PC-3 (cell line): ENCODE measurements at regions of chr4 and their contacts with region 1.

Region 1: GRCh38 chr4:81421346-81422218 is 50.1 kb downstream of the RASGEF1B start:
- DNase-seq: peak; percentile 89
- ATAC-seq: peak; percentile 98
- H3K4me3 ChIP-seq: no peak overlapping the region
- H3K27ac ChIP-seq: peak overlapping the region; percentile 52
- H3K4me1 ChIP-seq: peaks cover 17% of the 10 kb centered on the region
- H3K27me3 ChIP-seq: no peaks in the 10 kb centered on the region
- CTCF ChIP-seq: no peak

Region 2: DNA sequence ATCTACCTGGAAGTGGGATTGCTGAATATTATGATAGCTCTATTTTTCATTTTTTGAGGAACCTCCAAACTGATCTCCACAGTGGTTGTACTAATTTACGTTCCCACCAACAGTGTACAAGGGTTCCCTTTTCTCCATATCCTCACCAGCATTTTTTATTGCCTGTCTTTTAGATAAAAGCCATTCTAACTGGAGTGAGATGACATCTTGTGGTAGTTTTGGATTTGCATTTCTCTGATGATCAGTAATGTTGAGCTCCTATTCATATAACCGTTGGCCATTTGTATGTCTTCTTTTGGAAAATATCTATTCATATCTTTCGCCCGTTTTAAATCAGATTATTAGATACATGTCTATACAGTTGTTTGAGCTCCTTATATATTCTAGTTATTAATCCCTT is 51.7 kb before region 1 on chr4:
- CTCF ChIA-PET with region 1: no interaction called
- POLR2A ChIA-PET with region 1: no interaction called
- intact Hi-C with region 1: no loop called
- DNase-seq: peak; percentile 5
- ATAC-seq: 0 out of 2 replicates have a peak, but pooled peaks have one; percentile 29
- H3K4me3 ChIP-seq: no peak overlapping the region
- H3K27ac ChIP-seq: no peak overlapping the region
- H3K4me1 ChIP-seq: no peaks in the 10 kb centered on the region
- H3K27me3 ChIP-seq: no peaks in the 10 kb centered on the region
- CTCF ChIP-seq: peak; percentile 24; the same call in 1 of the 2 replicates

Region 3: DNA sequence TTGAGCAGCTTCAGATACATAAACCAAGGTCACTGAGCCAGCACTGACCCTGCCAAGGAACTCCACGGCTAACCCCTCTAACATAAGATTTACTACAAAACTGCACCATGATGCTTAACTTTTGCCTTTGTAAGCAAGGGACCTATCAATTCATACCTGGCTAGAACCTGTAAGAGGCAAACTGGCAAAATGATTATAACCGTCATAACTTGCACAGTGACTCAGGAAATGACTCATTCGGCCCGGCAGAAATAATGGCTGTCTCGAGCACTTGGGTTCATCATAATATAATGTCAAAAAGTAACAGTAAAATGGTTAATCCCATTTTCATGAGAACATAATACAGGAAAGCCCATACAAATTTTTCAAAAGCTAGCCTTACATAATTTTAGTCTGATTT is 32.9 kb after region 1 on chr4:
- CTCF ChIA-PET with region 1: no interaction called
- POLR2A ChIA-PET with region 1: no interaction called
- intact Hi-C with region 1: loop called (anchors 1 kb)
- DNase-seq: peak; percentile 71
- ATAC-seq: peak; percentile 54
- H3K4me3 ChIP-seq: no peak overlapping the region
- H3K27ac ChIP-seq: peak overlapping the region; percentile 14; the same call in 1 of the 2 replicates
- H3K4me1 ChIP-seq: peaks cover 38% of the 10 kb centered on the region
- H3K27me3 ChIP-seq: no peaks in the 10 kb centered on the region
- CTCF ChIP-seq: no peak

Region 4: GRCh38 chr4:81565142-81565870 is 143.7 kb after region 1 on chr4:
- CTCF ChIA-PET with region 1: no interaction called
- POLR2A ChIA-PET with region 1: no interaction called
- intact Hi-C with region 1: no loop called
- DNase-seq: peak; percentile 23
- ATAC-seq: no peak
- H3K4me3 ChIP-seq: no peak overlapping the region; the same call in 1 of the 2 replicates
- H3K27ac ChIP-seq: no peak overlapping the region
- H3K4me1 ChIP-seq: no peaks in the 10 kb centered on the region
- H3K27me3 ChIP-seq: no peaks in the 10 kb centered on the region
- CTCF ChIP-seq: no peak